CD8-positive, alpha-beta T cell (primary cell): ENCODE measurements at regions of chr1 and their contacts with region 1.

Region 1: DNA sequence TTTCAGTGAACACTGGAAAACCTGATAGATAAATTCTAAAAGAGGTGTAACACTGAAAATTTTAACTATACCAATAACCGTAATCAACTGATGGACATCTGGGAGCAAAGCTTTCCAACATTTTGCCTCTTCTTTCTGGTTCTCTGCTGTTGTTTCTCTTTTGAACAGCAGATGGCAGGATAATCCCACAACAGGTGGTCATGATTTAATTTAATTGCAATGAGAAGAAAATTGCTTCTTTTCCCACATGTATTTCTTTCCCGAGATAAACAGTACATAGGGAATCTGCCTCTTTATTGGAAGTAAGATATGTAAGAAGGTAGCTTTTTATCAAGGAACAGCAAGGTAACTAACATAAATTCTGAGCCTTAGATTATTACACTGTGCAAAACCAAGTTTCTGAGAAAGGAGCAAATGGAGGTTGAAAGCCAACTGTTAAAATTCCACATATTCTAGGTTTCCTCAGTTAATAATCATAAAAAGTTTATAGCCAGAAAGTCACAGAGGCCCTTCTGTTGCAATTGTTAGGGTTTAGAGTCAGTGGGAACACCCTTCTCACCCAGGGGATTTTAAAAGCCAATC is 72.9 kb downstream of the RPS6KA1 start:
- DNase-seq: peak in 5 of 9 experiments; percentile 16 to 81 (median 49)
- ATAC-seq: peak; percentile 67
- H3K4me3 ChIP-seq: no peak overlapping the region
- H3K4me3 Mint-ChIP-seq: no peak overlapping the region
- H3K27ac ChIP-seq: no peak overlapping the region
- H3K27ac Mint-ChIP-seq: no peak overlapping the region
- H3K4me1 ChIP-seq: peaks cover 5% of the 10 kb centered on the region
- H3K4me1 Mint-ChIP-seq: peaks cover 8% of the 10 kb centered on the region
- H3K27me3 ChIP-seq: no peaks in the 10 kb centered on the region
- H3K27me3 Mint-ChIP-seq: no peaks in the 10 kb centered on the region
- CTCF ChIP-seq: peak; percentile 98

Region 2: DNA sequence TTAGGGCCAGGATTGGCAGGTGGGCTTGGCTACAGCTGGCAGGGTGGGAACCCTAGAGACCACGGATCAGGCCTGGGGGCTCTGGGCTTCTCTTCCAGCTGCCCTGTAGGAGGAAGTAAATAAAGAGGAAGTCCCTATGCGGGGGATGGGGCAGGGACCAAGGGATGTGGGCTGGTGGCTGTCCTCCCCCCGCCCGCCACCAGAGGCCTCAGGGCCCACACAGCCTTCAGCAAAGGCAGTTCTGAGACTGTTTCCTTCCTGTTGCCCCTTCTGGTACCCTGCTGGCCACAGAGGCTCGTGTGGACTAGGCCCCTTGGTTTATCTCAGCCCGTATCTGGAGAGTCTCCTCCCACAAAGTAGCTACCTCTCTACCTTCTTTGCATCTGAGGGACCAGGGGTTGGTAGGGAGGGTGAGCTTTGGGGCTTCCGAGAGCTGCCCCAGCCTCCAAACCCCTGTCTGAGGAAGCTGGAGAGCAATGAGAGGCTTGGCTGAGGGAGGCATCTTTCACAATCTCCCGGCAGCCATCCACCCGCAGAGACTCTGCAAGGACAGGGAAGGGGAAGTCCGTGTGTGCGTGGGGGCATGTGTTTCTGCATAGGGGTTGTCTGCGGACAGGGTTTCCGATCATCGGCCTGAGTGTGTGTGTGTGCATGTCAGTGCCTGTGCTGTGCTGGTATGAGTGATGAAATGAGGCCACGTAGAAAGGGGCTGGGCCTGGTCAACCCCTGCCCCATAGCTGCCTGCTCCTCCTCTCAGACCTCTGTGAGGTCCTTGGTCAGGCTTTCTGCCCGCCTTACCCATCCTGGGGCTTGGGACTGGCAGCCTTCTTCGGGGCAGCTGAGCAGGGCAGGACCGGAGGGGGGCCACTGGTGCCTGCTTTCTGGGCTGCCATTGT is 60.4 kb before region 1 on chr1:
- CTCF ChIA-PET with region 1: interaction called, 12 read pairs
- POLR2A ChIA-PET with region 1: no interaction called
- intact Hi-C with region 1: no loop called
- DNase-seq: peak; percentile 45 to 90 (median 76)
- ATAC-seq: peak; percentile 71
- H3K4me3 ChIP-seq: peak overlapping the region; percentile 32 to 36
- H3K4me3 Mint-ChIP-seq: peak overlapping the region; percentile 81
- H3K27ac ChIP-seq: peak overlapping the region; percentile 56 to 85
- H3K27ac Mint-ChIP-seq: peak overlapping the region; percentile 97
- H3K4me1 ChIP-seq: peaks cover 87% of the 10 kb centered on the region
- H3K4me1 Mint-ChIP-seq: peaks cover 88% of the 10 kb centered on the region
- H3K27me3 ChIP-seq: no peaks in the 10 kb centered on the region
- H3K27me3 Mint-ChIP-seq: no peaks in the 10 kb centered on the region
- CTCF ChIP-seq: peak; percentile 65

Region 3: DNA sequence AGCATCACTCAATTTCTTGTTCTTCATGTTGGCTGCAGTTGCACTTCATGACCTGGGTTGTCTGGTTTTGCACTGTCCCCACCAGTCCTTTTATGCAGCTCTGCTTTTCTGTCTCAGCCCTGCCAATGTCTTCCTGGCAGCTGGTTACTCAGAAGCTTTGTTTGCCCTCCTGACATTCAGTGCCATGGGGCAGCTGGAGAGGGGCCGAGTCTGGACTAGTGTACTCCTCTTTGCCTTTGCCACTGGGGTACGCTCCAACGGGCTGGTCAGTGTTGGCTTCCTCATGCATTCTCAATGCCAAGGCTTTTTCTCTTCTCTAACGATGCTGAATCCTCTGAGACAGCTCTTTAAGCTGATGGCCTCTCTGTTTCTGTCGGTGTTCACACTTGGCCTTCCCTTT is 191.9 kb after region 1 on chr1:
- CTCF ChIA-PET with region 1: interaction called, 439 read pairs
- POLR2A ChIA-PET with region 1: interaction called, 46 read pairs
- intact Hi-C with region 1: loop called (anchors 1 kb)
- DNase-seq: no peak
- ATAC-seq: no peak
- H3K4me3 ChIP-seq: no peak overlapping the region
- H3K4me3 Mint-ChIP-seq: no peak overlapping the region
- H3K27ac ChIP-seq: no peak overlapping the region
- H3K27ac Mint-ChIP-seq: peak overlapping the region; percentile 41
- H3K4me1 ChIP-seq: peaks cover 20% of the 10 kb centered on the region
- H3K4me1 Mint-ChIP-seq: peaks cover 38% of the 10 kb centered on the region
- H3K27me3 ChIP-seq: no peaks in the 10 kb centered on the region
- H3K27me3 Mint-ChIP-seq: no peaks in the 10 kb centered on the region
- CTCF ChIP-seq: no peak

Region 4: DNA sequence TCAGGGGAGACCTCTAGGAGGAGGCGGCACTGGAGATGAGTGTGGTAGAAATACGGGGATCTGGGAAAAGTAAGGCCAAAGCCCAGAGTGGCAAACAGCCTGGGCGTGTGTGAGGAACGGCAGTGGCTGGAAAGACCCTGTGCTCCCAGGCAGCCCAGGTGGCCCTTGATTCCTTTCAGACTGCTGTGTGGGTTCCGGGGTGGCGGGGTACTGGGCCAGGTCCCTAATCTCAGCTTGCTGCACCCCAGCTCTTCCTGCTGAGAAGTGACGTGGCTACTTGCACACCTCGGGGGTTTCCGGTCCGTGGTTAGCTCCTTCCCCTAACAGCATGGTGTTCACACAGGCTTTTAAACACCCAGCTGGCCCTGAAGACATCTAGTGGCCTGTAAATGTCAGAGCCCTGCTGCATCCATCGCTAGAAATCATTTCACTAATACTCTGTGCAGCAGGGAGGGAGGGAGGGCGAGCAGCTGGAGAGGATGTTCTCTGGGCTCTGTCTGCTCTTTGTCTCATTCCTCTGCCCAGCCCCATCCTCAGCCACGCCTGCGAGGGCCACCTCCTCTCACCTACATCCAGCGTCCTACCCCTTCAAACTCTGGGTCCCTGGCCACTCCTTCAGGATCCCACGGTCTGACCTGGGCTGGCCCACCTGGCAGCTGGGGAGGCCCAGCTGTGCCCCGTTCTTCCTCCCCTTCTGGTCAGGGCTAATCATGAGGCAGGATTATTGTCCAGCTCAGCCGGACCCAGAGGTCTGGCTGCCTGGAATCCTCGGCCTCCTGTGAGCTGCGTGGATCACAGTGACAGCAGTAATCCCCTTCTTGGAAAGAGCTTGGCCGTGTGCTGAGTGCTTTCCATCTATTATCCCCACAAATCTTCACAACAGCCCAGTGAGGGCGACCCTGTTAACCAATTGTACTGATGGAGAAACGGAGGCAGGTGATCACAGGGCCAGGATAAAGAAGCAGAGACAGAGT is 231.2 kb after region 1 on chr1:
- CTCF ChIA-PET with region 1: interaction called, 30 read pairs
- POLR2A ChIA-PET with region 1: no interaction called
- intact Hi-C with region 1: no loop called
- DNase-seq: peak; percentile 74 to 99 (median 89)
- ATAC-seq: peak; percentile 94
- H3K4me3 ChIP-seq: peak overlapping the region; percentile 27 to 31
- H3K4me3 Mint-ChIP-seq: peak overlapping the region; percentile 73
- H3K27ac ChIP-seq: peak overlapping the region; percentile 88 to 98
- H3K27ac Mint-ChIP-seq: peak overlapping the region; percentile 100
- H3K4me1 ChIP-seq: peaks cover 51% of the 10 kb centered on the region
- H3K4me1 Mint-ChIP-seq: peaks cover 74% of the 10 kb centered on the region
- H3K27me3 ChIP-seq: no peaks in the 10 kb centered on the region
- H3K27me3 Mint-ChIP-seq: no peaks in the 10 kb centered on the region
- CTCF ChIP-seq: peak; percentile 53

Region 5: GRCh38 chr1:26874896-26875295 is 272.4 kb after region 1 on chr1:
- CTCF ChIA-PET with region 1: interaction called, 11 read pairs
- POLR2A ChIA-PET with region 1: no interaction called
- intact Hi-C with region 1: loop called (anchors 1 kb)
- DNase-seq: no peak
- ATAC-seq: no peak
- H3K4me3 ChIP-seq: no peak overlapping the region
- H3K4me3 Mint-ChIP-seq: no peak overlapping the region
- H3K27ac ChIP-seq: no peak overlapping the region
- H3K27ac Mint-ChIP-seq: no peak overlapping the region
- H3K4me1 ChIP-seq: no peaks in the 10 kb centered on the region
- H3K4me1 Mint-ChIP-seq: no peaks in the 10 kb centered on the region
- H3K27me3 ChIP-seq: no peaks in the 10 kb centered on the region
- H3K27me3 Mint-ChIP-seq: no peaks in the 10 kb centered on the region
- CTCF ChIP-seq: no peak